Activated CD4-positive, alpha-beta memory T cell treated with anti-CD3 and anti-CD28 coated beads for 36 hours (primary cell): ENCODE measurements at regions of chr1 and their contacts with region 1.

Region 1: DNA sequence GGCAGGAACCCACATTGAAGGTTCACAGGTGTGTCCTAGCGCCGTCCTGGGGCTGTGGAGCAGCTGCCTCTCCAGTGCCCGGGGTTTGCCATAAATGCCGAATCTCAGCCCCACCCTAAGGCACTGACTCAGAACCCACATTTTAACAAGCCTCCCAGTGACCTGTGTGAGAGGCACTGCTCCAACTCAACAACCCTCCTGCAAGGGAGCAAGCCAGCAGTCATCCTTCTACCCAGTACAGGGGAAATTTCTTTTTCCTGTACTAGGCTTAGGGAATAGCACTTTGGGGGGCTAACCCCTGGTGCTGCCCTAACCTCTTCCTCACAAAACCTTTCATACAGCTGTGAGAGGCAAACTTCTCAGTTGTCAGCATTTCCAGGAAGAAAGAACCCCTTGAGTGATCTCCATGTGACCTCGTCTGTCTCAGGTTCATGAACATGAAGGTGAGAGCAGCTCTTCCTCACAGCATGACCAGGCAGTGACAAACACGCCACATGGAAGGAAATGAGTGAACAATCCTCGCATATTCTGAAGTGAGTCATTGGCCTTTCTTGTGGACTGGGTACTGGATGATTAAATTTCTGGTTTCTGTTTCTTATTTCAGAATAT is 11.4 kb upstream of the BCAR3 start:
- DNase-seq: peak; percentile 78
- H3K4me3 Mint-ChIP-seq: peak overlapping the region; percentile 1
- H3K27ac Mint-ChIP-seq: peak overlapping the region; percentile 70
- H3K4me1 Mint-ChIP-seq: peaks cover 14% of the 10 kb centered on the region
- H3K27me3 Mint-ChIP-seq: peaks cover 4% of the 10 kb centered on the region

Region 2: GRCh38 chr1:93042187-93043056 is 650.7 kb before region 1 on chr1:
- CTCF ChIA-PET with region 1: no interaction called
- POLR2A ChIA-PET with region 1: no interaction called
- intact Hi-C with region 1: loop called (anchors 1 kb)
- DNase-seq: peak; percentile 21
- H3K4me3 Mint-ChIP-seq: peak overlapping the region; percentile 71
- H3K27ac Mint-ChIP-seq: peak overlapping the region; percentile 88
- H3K4me1 Mint-ChIP-seq: peaks cover 28% of the 10 kb centered on the region
- H3K27me3 Mint-ChIP-seq: no peaks in the 10 kb centered on the region

Region 3: DNA sequence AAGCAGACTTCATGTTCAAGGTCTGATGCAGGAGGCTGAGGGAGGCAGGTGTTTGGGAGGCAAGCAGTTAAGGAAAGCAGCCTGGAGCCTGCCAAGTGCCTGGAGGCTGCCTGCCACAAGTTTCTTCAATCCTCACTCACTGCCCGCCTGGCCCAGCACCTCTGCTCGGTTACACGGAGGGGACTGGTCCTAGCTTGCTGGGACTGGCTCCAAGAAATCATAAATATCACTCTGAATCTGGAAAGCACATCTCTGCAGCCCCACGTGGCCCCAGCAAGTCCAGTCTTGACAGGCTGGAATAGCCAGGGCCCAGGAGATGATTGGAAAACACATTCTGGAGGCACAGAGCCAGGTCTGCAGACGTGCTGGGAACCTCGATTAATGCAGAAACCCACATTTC is 95.4 kb before region 1 on chr1:
- CTCF ChIA-PET with region 1: no interaction called
- POLR2A ChIA-PET with region 1: no interaction called
- intact Hi-C with region 1: no loop called
- DNase-seq: no peak
- H3K4me3 Mint-ChIP-seq: no peak overlapping the region
- H3K27ac Mint-ChIP-seq: no peak overlapping the region
- H3K4me1 Mint-ChIP-seq: no peaks in the 10 kb centered on the region
- H3K27me3 Mint-ChIP-seq: peaks cover 2% of the 10 kb centered on the region

Region 4: DNA sequence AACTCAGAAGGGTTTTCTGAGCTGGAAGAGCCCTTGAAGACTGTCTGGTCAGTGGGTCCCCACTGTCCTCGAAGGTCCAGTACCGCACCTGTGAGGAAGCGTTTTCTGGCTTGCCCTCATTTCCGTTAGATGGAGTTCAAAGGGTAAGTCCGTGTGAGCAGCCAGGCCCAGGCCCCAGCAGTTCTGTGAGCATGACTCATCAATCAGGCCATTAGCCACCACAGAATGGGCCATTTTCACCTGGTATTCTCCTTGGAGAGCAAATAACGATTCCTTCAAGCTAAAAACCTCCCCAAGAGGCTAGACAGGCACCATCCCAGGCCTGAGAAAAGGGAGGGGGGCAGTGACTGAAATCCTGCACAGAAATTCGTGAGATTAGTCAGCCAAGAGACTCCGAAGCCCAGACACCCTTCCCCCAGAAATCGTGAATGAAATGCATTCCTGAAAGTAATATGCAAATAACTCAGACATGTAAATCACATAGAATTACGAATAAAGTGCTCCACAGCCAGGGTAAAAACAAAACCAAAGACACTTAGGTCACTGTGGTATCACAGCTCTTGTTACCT is 77.4 kb before region 1 on chr1:
- CTCF ChIA-PET with region 1: interaction called, 3 read pairs
- POLR2A ChIA-PET with region 1: interaction called, 5 read pairs
- intact Hi-C with region 1: loop called (anchors 1 kb)
- DNase-seq: peak; percentile 87
- H3K4me3 Mint-ChIP-seq: peak overlapping the region; percentile 45
- H3K27ac Mint-ChIP-seq: peak overlapping the region; percentile 84
- H3K4me1 Mint-ChIP-seq: peaks cover 26% of the 10 kb centered on the region
- H3K27me3 Mint-ChIP-seq: peaks cover 6% of the 10 kb centered on the region

Region 5: DNA sequence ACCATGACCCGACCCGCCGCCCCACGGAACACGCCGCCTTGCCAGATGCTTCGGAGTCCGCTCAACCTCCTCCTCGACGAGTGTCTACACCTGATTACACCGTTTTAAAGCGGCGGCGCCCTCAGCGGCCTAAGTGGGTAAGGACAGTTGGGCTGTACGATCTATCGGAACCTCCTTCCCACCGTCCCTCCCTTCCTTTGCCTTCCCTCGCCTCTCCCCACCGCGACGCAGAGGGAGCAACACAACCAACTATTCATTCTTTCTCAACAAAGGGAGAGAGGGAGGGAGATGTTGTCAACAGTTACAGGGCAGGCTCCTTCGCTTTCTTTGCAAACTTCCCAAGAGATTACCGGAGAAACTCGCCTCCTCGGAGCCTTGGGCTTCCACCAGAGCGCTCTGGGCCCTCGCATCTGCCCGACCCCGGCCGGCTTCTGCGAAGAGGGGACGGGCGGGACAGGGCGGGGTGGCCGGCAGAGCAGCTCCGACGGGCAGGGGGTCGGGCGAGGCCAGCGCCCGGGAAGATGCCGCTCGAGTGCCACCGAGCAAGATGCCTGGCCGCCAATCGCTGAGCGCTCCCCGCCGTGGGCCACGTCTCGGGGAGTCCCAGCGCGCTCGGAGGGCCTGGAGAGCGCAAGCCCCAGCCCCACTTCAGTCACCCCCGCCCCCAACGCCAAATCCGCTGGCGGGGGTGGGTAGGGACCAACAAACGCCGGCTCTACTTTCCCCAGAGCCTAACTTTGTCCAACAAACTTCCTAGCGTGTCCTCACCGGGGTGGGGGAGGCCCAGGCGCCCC is 12.1 kb before region 1 on chr1:
- CTCF ChIA-PET with region 1: interaction called, 7 read pairs
- POLR2A ChIA-PET with region 1: interaction called, 5 read pairs
- intact Hi-C with region 1: loop called (anchors 1 kb)
- DNase-seq: peak; percentile 70
- H3K4me3 Mint-ChIP-seq: peak overlapping the region; percentile 78
- H3K27ac Mint-ChIP-seq: no peak overlapping the region
- H3K4me1 Mint-ChIP-seq: peaks cover 10% of the 10 kb centered on the region
- H3K27me3 Mint-ChIP-seq: peaks cover 48% of the 10 kb centered on the region

Region 6: GRCh38 chr1:93715529-93716126 is 22.5 kb after region 1 on chr1:
- CTCF ChIA-PET with region 1: interaction called, 12 read pairs
- POLR2A ChIA-PET with region 1: interaction called, 12 read pairs
- intact Hi-C with region 1: loop called (anchors 1 kb)
- DNase-seq: peak; percentile 65
- H3K4me3 Mint-ChIP-seq: no peak overlapping the region
- H3K27ac Mint-ChIP-seq: peak overlapping the region; percentile 57
- H3K4me1 Mint-ChIP-seq: peaks cover 40% of the 10 kb centered on the region
- H3K27me3 Mint-ChIP-seq: peaks cover 12% of the 10 kb centered on the region

Region 7: DNA sequence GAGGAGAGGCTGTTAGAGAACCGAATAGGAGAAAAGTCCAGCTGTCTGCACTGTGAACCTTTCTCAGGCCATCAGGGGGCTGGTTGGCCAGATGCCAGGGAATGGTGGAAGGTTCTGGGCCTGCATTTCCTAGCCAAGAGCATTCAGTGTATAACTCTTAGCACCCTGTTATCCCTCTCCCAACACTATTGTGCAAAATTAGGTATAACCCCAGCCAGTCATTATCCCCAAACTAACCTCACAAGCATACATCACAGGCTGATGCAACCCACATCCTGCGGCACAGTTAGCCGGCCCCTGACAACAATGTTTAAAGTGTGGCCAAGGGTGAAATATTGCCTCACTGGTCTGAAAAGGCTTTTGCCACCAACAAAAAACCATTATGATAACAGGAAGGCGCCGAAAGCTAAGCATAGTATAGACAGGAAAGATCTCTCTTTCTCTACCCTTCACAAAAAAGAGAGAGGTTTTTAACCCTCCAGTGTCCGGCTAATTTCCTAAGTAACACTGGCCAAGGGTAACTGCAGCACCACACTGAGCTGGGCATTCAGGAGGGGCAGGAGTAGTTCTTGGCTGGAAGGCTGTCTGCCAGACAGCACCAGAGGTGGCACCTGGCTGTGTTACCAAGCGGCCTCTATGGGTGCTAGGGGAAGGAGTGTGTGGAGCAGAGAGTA is 65.9 kb after region 1 on chr1:
- CTCF ChIA-PET with region 1: no interaction called
- POLR2A ChIA-PET with region 1: no interaction called
- intact Hi-C with region 1: loop called (anchors 5 kb)
- DNase-seq: peak; percentile 65
- H3K4me3 Mint-ChIP-seq: no peak overlapping the region
- H3K27ac Mint-ChIP-seq: peak overlapping the region; percentile 42
- H3K4me1 Mint-ChIP-seq: peaks cover 7% of the 10 kb centered on the region
- H3K27me3 Mint-ChIP-seq: no peaks in the 10 kb centered on the region